B cell (primary cell): ENCODE measurements at regions of chr19 and their contacts with region 1.

Region 1: DNA sequence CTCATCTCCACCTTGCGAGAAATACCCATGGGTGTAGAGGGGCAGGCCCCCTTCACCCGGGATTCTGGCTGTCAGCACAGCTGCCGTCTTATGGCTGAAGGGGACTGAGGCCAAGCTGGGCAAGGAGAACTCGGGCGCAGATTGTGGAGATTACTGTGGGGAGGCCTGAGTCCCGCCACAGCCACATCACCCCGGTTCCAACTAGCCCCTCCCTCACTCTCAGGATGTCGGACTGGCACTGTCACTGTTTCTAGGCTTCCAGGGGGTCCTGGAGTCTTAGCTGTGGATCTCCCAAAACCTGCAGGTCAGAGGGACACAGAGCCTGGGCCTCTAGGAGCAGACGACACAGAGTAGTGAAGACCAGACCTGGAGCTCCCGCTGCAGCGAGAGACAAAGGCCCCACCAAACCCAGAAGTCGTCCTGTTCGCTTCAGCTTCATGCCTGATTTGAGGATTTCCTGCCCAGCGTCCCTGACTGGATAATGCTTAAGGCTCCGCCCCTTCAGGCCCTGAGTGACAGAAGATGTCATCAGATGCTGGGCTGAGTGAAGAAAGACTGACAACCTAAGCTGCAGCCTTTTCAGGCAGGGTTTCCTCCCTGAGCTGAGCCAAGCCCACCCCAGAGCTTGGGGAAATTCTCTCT is 55.8 kb downstream of the ZNF93 start:
- DNase-seq: no peak
- ATAC-seq: no peak
- H3K4me3 ChIP-seq: no peak overlapping the region
- H3K4me3 Mint-ChIP-seq: no peak overlapping the region
- H3K27ac ChIP-seq: no peak overlapping the region
- H3K27ac Mint-ChIP-seq: no peak overlapping the region
- H3K4me1 ChIP-seq: peaks cover 0 to 6% of the 10 kb centered on the region in 2 donors
- H3K4me1 Mint-ChIP-seq: peaks cover 5% of the 10 kb centered on the region
- H3K27me3 ChIP-seq: no peaks in the 10 kb centered on the region
- H3K27me3 Mint-ChIP-seq: no peaks in the 10 kb centered on the region
- CTCF ChIP-seq: no peak

Region 2: GRCh38 chr19:19531951-19532805 is 424.4 kb before region 1 on chr19:
- CTCF ChIA-PET with region 1: interaction called, 88 read pairs
- POLR2A ChIA-PET with region 1: no interaction called
- intact Hi-C with region 1: no loop called
- DNase-seq: peak; percentile 87
- ATAC-seq: peak; percentile 78
- H3K4me3 ChIP-seq: no peak overlapping the region
- H3K4me3 Mint-ChIP-seq: no peak overlapping the region
- H3K27ac ChIP-seq: no peak overlapping the region
- H3K27ac Mint-ChIP-seq: peak overlapping the region; percentile 86
- H3K4me1 ChIP-seq: peaks cover 7 to 9% of the 10 kb centered on the region in 2 donors
- H3K4me1 Mint-ChIP-seq: peaks cover 6% of the 10 kb centered on the region
- H3K27me3 ChIP-seq: peaks cover 0 to 1% (median 0%) of the 10 kb centered on the region in 4 experiments
- H3K27me3 Mint-ChIP-seq: no peaks in the 10 kb centered on the region
- CTCF ChIP-seq: peak; percentile 95

Region 3: GRCh38 chr19:19732579-19733501 is 223.7 kb before region 1 on chr19 and contains the start of gene ZNF14:
- CTCF ChIA-PET with region 1: no interaction called
- POLR2A ChIA-PET with region 1: no interaction called
- intact Hi-C with region 1: loop called (anchors 1 kb)
- DNase-seq: peak; percentile 94
- ATAC-seq: peak; percentile 100
- H3K4me3 ChIP-seq: peak within 1 kb of the TSS; percentile 59 to 95 (median 94)
- H3K4me3 Mint-ChIP-seq: peak within 1 kb of the TSS; percentile 99
- H3K27ac ChIP-seq: peak within 1 kb of the TSS; percentile 49 to 76
- H3K27ac Mint-ChIP-seq: peak within 1 kb of the TSS; percentile 96
- H3K4me1 ChIP-seq: peaks cover 11 to 17% of the 10 kb centered on the region in 2 donors
- H3K4me1 Mint-ChIP-seq: peaks cover 27% of the 10 kb centered on the region
- H3K27me3 ChIP-seq: no peaks in the 10 kb centered on the region
- H3K27me3 Mint-ChIP-seq: no peaks in the 10 kb centered on the region
- CTCF ChIP-seq: no peak
- total RNA-seq, gene ZNF14: 21.0 and 22.5 TPM in 2 replicates

Region 4: DNA sequence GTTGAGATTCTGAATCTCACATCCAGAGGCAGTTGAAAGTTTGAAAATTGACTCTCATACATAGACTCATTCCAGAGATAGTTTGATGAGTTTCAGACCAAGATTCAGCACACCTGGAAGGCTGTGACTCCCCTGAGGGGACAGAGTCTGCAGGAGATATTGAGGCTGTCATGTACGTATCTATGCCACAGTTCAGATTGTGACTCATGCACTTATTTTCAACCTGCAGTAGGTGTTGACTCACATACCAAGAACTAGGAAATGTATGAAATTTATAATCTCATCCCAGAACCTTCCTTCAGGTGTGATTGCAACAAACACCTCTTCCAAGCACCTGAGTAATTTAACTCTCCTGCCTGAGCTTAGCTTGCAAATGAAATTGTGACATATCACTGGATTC is 1943.8 kb after region 1 on chr19:
- CTCF ChIA-PET with region 1: no interaction called
- POLR2A ChIA-PET with region 1: no interaction called
- intact Hi-C with region 1: no loop called
- DNase-seq: no peak
- ATAC-seq: no peak
- H3K4me3 ChIP-seq: no peak overlapping the region
- H3K4me3 Mint-ChIP-seq: no peak overlapping the region
- H3K27ac ChIP-seq: no peak overlapping the region
- H3K27ac Mint-ChIP-seq: no peak overlapping the region
- H3K4me1 ChIP-seq: no peaks in the 10 kb centered on the region
- H3K4me1 Mint-ChIP-seq: no peaks in the 10 kb centered on the region
- H3K27me3 ChIP-seq: no peaks in the 10 kb centered on the region
- H3K27me3 Mint-ChIP-seq: no peaks in the 10 kb centered on the region
- CTCF ChIP-seq: no peak